A673 (cell line): ENCODE measurements at regions of chr1 and their contacts with region 1.

Region 1: GRCh38 chr1:157580179-157580827 is 17.6 kb downstream of the FCRL4 start:
- DNase-seq: peak; percentile 68
- H3K4me3 ChIP-seq: no peak overlapping the region
- H3K27ac ChIP-seq: no peak overlapping the region
- H3K4me1 ChIP-seq: no peaks in the 10 kb centered on the region
- H3K27me3 ChIP-seq: peaks cover 21% of the 10 kb centered on the region
- CTCF ChIP-seq: peak; percentile 86

Region 2: GRCh38 chr1:157626099-157626498 is 45.8 kb after region 1 on chr1:
- CTCF ChIA-PET with region 1: no interaction called
- POLR2A ChIA-PET with region 1: no interaction called
- intact Hi-C with region 1: loop called (anchors 1 kb)
- DNase-seq: peak; percentile 12
- H3K4me3 ChIP-seq: no peak overlapping the region
- H3K27ac ChIP-seq: no peak overlapping the region
- H3K4me1 ChIP-seq: no peaks in the 10 kb centered on the region
- H3K27me3 ChIP-seq: peaks cover 42% of the 10 kb centered on the region
- CTCF ChIP-seq: peak; percentile 71

Region 3: DNA sequence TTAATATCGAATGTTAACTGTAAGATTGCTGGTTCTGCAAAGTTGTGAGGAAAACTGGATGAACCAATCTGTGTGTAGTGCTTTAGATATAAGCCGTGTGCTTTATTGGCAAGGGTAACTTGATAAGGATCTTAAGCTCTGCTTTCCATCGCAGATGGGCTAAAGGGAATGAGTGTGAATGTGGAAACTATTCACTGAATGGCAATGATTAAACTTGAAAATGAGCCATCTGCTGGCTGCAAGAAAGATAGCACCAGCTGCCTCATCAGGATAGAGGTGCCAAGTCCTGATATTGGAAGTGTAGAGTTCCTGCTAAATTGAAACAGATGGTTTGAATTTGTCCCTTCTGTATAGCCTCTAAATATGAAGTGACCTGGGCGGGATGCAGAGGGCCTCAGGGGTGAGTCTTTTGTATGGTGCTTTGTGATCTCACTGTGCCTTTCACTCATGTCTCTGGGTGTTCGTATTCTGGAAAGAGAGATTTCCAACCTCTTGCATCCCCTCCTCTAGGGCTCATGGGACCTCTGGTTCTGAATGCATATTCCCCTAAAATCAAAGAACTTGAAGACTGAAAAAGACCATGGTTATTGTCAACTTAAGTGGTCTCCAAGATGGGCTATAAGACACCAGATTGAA is 111.1 kb after region 1 on chr1:
- CTCF ChIA-PET with region 1: interaction called, 20 read pairs
- POLR2A ChIA-PET with region 1: interaction called, 11 read pairs
- intact Hi-C with region 1: loop called (anchors 1 kb)
- DNase-seq: peak; percentile 69
- H3K4me3 ChIP-seq: no peak overlapping the region
- H3K27ac ChIP-seq: no peak overlapping the region
- H3K4me1 ChIP-seq: no peaks in the 10 kb centered on the region
- H3K27me3 ChIP-seq: no peaks in the 10 kb centered on the region
- CTCF ChIP-seq: peak; percentile 80

Region 4: GRCh38 chr1:157773493-157774350 is 193.4 kb after region 1 on chr1:
- CTCF ChIA-PET with region 1: no interaction called
- POLR2A ChIA-PET with region 1: no interaction called
- intact Hi-C with region 1: loop called (anchors 2 kb)
- DNase-seq: peak; percentile 35
- H3K4me3 ChIP-seq: no peak overlapping the region
- H3K27ac ChIP-seq: no peak overlapping the region
- H3K4me1 ChIP-seq: peaks cover 19% of the 10 kb centered on the region
- H3K27me3 ChIP-seq: no peaks in the 10 kb centered on the region
- CTCF ChIP-seq: peak; percentile 47

Region 5: DNA sequence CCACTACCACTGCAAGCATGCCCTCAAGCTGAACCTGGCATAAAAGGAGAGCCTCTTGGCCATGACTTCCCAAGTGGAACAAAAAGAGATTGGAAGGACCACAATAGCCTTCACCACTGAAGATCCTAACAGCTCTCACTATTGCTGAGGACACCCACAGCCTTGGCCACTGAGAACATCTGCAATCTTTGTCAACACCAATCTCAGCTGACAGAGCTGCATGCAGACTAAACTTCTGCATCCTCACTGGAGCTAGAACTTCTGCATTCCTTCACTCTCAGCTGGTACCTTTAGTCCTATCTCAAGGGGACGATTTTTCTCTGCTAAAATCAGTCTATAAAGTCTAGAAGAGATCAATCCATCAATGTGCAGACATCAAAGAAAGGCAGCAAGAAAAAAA is 204.9 kb after region 1 on chr1:
- CTCF ChIA-PET with region 1: no interaction called
- POLR2A ChIA-PET with region 1: no interaction called
- intact Hi-C with region 1: no loop called
- DNase-seq: no peak
- H3K4me3 ChIP-seq: no peak overlapping the region
- H3K27ac ChIP-seq: no peak overlapping the region
- H3K4me1 ChIP-seq: peaks cover 2% of the 10 kb centered on the region
- H3K27me3 ChIP-seq: no peaks in the 10 kb centered on the region
- CTCF ChIP-seq: no peak

Region 6: GRCh38 chr1:157862114-157863070 is 282.1 kb after region 1 on chr1:
- CTCF ChIA-PET with region 1: no interaction called
- POLR2A ChIA-PET with region 1: no interaction called
- intact Hi-C with region 1: loop called (anchors 10 kb)
- DNase-seq: no peak
- H3K4me3 ChIP-seq: no peak overlapping the region
- H3K27ac ChIP-seq: no peak overlapping the region
- H3K4me1 ChIP-seq: no peaks in the 10 kb centered on the region
- H3K27me3 ChIP-seq: peaks cover 54% of the 10 kb centered on the region
- CTCF ChIP-seq: no peak